CD4-positive, alpha-beta memory T cell (primary cell): ENCODE measurements at regions of chr3 and their contacts with region 1.

Region 1: DNA sequence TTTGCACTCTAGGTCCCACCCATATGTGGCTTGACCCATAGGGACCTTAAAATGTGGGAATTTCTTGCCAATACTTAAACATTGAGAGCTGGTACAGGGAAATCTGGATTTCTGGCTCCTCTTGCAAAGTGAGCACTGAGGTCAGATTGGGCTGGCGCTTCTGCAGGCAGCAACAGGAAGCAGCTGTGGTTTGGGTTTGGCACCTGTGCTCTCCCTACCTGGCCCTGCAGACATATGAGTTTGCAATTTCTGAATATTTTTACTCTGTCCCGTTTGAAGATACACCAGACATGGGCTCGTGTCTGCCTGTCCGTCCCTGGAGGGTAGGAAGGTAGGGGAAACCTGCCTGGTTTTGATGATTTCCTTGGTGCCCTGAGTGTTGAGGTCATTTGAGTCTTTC is 74.8 kb upstream of the SEC13 start:
- DNase-seq: peak; percentile 34 to 61 (median 50)
- H3K4me3 ChIP-seq: peak overlapping the region in 1 of 2 donors; percentile 33
- H3K4me3 Mint-ChIP-seq: peak overlapping the region in 7 of 8 donors; percentile 19 to 81 (median 71)
- H3K27ac ChIP-seq: no peak overlapping the region
- H3K27ac Mint-ChIP-seq: peak overlapping the region in 6 of 7 donors; percentile 8 to 80 (median 46)
- H3K4me1 ChIP-seq: peaks cover 58% of the 10 kb centered on the region
- H3K4me1 Mint-ChIP-seq: peaks cover 31 to 75% (median 47%) of the 10 kb centered on the region in 4 donors
- H3K27me3 ChIP-seq: no peaks in the 10 kb centered on the region
- H3K27me3 Mint-ChIP-seq: no peaks in the 10 kb centered on the region

Region 2: DNA sequence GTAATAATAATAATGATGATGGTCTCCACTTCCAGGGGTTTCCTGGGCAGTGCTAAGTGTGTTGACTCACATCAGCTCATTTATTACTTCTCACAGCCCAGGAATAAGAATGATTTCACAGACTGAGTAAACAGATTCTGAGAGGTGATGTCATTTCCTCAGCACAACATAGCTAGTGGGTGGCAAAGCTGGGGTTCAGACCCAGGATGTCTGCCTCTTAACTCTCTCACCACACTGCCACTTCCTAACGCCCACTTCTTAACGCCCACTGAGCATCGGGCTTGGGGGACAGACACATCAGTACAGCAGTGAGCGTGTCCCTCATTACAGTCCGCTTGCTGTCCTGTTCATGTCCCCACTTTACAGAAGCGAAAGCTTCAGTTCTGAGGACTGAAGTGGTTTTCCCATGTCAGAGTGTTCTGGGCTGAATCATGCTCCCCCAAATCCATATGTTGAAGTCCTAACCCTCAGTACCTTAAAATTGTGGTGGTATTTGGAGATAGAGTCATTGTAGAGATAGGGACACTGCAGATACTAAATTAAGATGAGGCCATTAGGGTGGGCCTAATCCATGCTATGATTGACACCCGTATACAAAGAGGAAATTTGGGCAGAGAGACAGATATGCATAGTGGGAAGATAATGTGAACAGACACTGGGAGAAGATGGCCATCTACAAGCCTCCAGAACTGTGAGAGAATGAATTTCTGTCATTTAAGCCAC is 41.8 kb after region 1 on chr3:
- CTCF ChIA-PET with region 1: interaction called, 9 read pairs
- POLR2A ChIA-PET with region 1: interaction called, 15 read pairs
- intact Hi-C with region 1: loop called (anchors 1 kb)
- DNase-seq: peak; percentile 29 to 66 (median 38)
- H3K4me3 ChIP-seq: no peak overlapping the region
- H3K4me3 Mint-ChIP-seq: peak overlapping the region in 6 of 8 donors; percentile 29 to 74 (median 46)
- H3K27ac ChIP-seq: no peak overlapping the region
- H3K27ac Mint-ChIP-seq: peak overlapping the region in 6 of 7 donors; percentile 10 to 83 (median 75)
- H3K4me1 ChIP-seq: peaks cover 21% of the 10 kb centered on the region
- H3K4me1 Mint-ChIP-seq: peaks cover 6 to 25% (median 21%) of the 10 kb centered on the region in 4 donors
- H3K27me3 ChIP-seq: no peaks in the 10 kb centered on the region
- H3K27me3 Mint-ChIP-seq: no peaks in the 10 kb centered on the region